Right ventricle myocardium superior (tissue), 1 donor: ENCODE measurements at regions of chr6 and their contacts with region 1.

Region 1: GRCh38 chr6:100479179-100480035 is 14.7 kb upstream of the SIM1 start:
- DNase-seq: no peak
- ATAC-seq: no peak

Region 2: GRCh38 chr6:100121854-100122609 is 357.4 kb before region 1 on chr6:
- intact Hi-C with region 1: loop called (anchors 5 kb)
- DNase-seq: no peak
- ATAC-seq: no peak

Region 3: DNA sequence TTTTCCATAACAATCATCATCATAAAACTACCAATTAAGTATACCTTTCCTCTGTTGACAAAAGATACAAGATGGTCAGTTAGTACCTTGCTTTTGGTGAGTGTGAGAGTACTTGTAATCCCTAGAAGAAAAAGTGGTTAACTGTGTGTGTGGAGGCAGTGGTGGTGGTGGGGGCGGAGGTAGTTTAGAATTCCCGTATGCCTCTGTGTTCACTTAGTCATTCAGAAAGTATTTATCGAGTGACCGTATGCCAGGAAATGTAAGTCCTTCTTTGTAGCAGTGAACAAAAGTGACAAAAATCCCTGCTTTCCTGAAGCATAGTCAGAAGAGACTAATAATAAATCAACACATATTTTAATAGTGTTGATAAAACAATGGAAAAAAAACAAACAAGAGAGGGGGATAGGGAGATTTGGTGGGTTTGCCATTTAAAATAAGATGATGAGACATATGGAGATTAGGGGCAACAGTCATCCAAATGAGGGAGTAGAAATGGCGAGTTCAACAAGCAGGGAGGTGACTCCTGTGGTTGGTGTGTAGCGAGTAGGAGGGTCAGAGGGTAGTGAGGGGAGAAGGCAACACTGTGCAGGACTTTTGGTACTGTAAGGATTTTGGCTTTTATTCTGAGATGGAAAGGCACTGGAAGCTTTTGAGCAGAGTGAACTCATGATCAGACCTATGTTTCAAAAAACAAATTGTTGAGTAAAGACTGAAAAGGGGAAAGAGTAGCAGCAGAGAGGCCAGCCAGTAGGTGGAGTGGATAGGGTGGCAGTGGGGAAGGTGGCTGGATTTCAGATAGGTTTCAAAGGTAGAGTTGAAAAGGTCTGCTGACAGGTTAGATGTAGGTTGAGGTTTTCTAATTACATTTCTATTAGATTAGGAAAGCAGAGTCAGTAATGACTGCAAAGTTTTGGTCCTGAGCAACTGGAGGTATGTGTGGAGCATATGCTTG is 25.7 kb after region 1 on chr6:
- intact Hi-C with region 1: no loop called
- DNase-seq: no peak
- ATAC-seq: no peak

Region 4: GRCh38 chr6:100620085-100620840 is 140.9 kb after region 1 on chr6:
- intact Hi-C with region 1: no loop called
- DNase-seq: no peak
- ATAC-seq: no peak